Endothelial cell of umbilical vein (primary cell): ENCODE measurements at regions of chr16 and their contacts with region 1.

Region 1: DNA sequence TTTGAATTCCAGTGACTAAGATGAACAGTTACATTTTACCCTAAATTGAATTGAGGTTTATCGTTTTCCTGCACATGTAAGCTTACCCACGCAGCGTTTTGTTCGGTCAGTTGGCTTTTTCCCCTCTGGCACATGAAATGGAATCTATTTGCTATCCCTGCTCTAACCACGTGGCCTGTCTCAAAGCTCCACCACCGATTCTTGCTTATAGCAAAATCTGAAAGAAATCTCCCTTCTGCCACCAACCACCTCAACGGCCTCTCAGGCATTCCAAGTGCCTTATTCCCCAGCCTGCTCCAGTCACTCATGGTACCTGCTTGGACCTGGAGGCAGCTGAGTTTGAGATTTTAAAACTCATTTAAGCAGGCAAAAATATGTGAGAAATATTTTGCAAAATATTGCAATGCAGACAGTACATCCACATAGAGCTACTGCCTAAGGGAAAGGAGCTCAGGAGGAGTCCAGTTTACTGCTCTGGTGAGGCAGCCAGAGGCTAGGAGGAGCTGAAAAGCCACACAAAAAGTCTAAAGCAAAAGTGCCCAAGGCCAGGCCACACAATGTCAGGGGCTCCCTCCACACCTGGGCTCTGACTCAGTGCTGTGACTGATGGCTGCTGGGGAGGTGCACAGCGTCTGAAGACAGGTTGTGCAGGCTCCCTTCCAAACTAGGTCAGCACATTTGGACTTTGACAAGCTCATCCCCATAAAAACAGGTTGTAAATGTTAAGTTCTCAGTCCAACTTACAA is 26.4 kb downstream of the ARHGAP17 start:
- DNase-seq: peak; percentile 92
- H3K4me3 ChIP-seq: peak overlapping the region in 1 of 3 experiments; percentile 60
- H3K27ac ChIP-seq: peak overlapping the region; percentile 99
- H3K4me1 ChIP-seq: peaks cover 88% of the 10 kb centered on the region
- H3K27me3 ChIP-seq: no peaks in the 10 kb centered on the region
- CTCF ChIP-seq: no peak
- POLR2A ChIP-seq: no peak

Region 2: GRCh38 chr16:24539291-24539849 is 449.4 kb before region 1 on chr16 and contains the start of gene RBBP6:
- CTCF ChIA-PET with region 1: no interaction called
- POLR2A ChIA-PET with region 1: no interaction called
- dilution Hi-C with region 1: no loop called
- intact Hi-C with region 1: loop called (anchors 5 kb)
- DNase-seq: peak; percentile 98
- H3K4me3 ChIP-seq: peak within 1 kb of the TSS; percentile 80 to 94 (median 88)
- H3K27ac ChIP-seq: peak within 1 kb of the TSS; percentile 96
- H3K4me1 ChIP-seq: peaks cover 36% of the 10 kb centered on the region
- H3K27me3 ChIP-seq: no peaks in the 10 kb centered on the region
- CTCF ChIP-seq: peak in 1 of 2 donors; percentile 28
- POLR2A ChIP-seq: peak; percentile 93
- total RNA-seq, gene RBBP6: 49.2 and 52.1 TPM in 2 replicates

Region 3: GRCh38 chr16:24834459-24835335 is 154.1 kb before region 1 on chr16:
- CTCF ChIA-PET with region 1: no interaction called
- POLR2A ChIA-PET with region 1: no interaction called
- dilution Hi-C with region 1: no loop called
- intact Hi-C with region 1: loop called (anchors 10 kb)
- DNase-seq: peak; percentile 52
- H3K4me3 ChIP-seq: no peak overlapping the region
- H3K27ac ChIP-seq: no peak overlapping the region
- H3K4me1 ChIP-seq: peaks cover 12% of the 10 kb centered on the region
- H3K27me3 ChIP-seq: no peaks in the 10 kb centered on the region
- CTCF ChIP-seq: peak; percentile 44 to 64
- POLR2A ChIP-seq: no peak

Region 4: GRCh38 chr16:25014500-25015147 is 25.9 kb after region 1 on chr16:
- CTCF ChIA-PET with region 1: interaction called, 7 read pairs
- POLR2A ChIA-PET with region 1: interaction called, 6 read pairs
- dilution Hi-C with region 1: no loop called
- intact Hi-C with region 1: loop called (anchors 1 kb)
- DNase-seq: peak; percentile 59
- H3K4me3 ChIP-seq: peak overlapping the region; percentile 75 to 99 (median 97)
- H3K27ac ChIP-seq: peak overlapping the region; percentile 56
- H3K4me1 ChIP-seq: peaks cover 35% of the 10 kb centered on the region
- H3K27me3 ChIP-seq: no peaks in the 10 kb centered on the region
- CTCF ChIP-seq: no peak
- POLR2A ChIP-seq: peak; percentile 2

Region 5: DNA sequence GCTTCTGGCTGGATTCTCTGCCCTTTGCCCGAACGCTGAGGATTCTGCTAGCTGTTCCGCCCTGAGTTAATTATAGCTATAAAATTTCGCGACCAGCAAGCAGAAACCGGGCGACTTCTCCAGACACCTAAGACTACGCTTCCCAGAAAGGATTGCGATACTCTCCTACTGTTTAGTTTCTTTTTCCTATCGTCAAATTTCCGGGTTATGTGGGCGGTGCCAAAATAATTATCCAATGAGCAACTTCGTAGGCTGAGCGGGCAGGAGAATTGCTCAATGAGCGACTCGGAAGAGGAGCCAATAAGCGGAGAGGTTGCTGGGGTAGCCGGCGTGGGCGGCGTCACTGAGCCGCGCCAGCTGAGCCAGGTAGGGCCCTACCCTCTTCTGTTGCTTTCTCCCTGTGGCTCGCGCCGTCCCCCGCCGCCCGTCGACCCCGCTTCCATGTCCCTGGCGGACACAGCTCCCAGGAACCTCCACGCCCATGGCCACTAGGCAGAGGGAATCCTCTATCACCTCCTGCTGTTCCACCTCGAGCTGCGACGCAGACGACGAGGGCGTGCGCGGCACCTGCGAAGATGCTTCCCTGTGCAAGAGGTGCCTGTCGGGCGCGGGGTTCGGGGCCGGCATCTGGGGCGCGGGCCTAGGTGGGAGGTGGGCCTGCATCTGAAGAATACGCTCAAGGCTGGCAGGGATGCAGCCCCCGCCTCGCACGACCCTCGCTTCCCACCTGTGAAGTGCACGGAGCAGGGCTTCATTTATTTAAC is 122.8 kb after region 1 on chr16 and contains the start of gene LCMT1:
- CTCF ChIA-PET with region 1: no interaction called
- POLR2A ChIA-PET with region 1: no interaction called
- dilution Hi-C with region 1: no loop called
- intact Hi-C with region 1: loop called (anchors 2 kb)
- DNase-seq: peak; percentile 99
- H3K4me3 ChIP-seq: peak within 1 kb of the TSS; percentile 71 to 93 (median 84)
- H3K27ac ChIP-seq: peak within 1 kb of the TSS; percentile 73
- H3K4me1 ChIP-seq: peaks cover 26% of the 10 kb centered on the region
- H3K27me3 ChIP-seq: no peaks in the 10 kb centered on the region
- CTCF ChIP-seq: no peak
- POLR2A ChIP-seq: peak; percentile 37
- total RNA-seq, gene LCMT1: 36.2 and 36.8 TPM in 2 replicates